Natural killer cell (primary cell): ENCODE measurements at regions of chr1 and their contacts with region 1.

Region 1: DNA sequence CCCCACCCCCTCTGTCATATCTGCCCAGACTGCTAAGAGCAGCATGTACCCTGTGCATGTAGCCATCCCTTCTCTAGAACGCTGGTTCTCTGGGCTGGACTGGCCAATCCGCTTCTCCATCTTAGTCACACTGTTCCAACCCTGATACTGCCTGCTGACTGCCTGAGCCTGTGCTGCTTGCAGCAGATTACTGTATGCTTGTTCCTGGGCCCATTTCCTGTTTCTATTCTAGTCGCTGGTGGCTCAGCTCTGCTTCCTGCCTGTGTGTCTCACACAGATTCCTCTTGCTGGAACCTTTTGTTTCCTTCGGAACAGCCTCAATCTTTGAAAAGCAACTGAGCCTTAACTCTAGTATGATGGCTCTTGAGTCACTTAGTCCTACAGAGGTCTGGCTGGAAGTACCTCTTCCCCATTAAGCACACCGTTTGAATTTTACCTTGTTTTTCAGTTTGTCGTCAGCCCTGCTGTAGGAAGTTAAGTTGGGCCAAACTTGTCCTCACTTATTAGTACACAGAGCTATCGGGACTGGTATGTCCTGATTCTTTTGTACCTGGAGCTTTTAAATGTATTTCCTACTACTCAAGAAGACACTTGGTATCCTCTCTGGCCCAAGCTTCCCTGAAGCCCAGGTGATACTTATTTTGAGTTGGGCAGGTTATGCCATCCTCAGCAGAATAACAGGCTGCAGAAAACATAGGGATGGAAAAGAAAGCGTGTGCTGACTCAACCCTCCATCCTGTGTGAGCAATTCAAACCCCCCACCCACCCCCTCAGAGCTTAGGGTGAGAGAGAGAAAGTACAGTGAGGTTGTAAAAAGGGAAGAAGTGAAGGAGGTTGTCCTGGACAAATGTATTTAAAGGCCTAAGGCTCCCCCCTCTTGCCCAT is 43.4 kb upstream of the PIGV start:
- DNase-seq: peak; percentile 59 to 91
- ATAC-seq: peak; percentile 94 to 98 (median 96)
- H3K4me3 ChIP-seq: no peak overlapping the region
- H3K4me3 Mint-ChIP-seq: peak overlapping the region; percentile 70
- H3K27ac ChIP-seq: peak overlapping the region; percentile 76
- H3K27ac Mint-ChIP-seq: peak overlapping the region; percentile 92 to 93
- H3K4me1 ChIP-seq: peaks cover 47% of the 10 kb centered on the region
- H3K4me1 Mint-ChIP-seq: peaks cover 66 to 68% of the 10 kb centered on the region in 2 donors
- H3K27me3 ChIP-seq: no peaks in the 10 kb centered on the region
- H3K27me3 Mint-ChIP-seq: no peaks in the 10 kb centered on the region
- CTCF ChIP-seq: no peak

Region 2: DNA sequence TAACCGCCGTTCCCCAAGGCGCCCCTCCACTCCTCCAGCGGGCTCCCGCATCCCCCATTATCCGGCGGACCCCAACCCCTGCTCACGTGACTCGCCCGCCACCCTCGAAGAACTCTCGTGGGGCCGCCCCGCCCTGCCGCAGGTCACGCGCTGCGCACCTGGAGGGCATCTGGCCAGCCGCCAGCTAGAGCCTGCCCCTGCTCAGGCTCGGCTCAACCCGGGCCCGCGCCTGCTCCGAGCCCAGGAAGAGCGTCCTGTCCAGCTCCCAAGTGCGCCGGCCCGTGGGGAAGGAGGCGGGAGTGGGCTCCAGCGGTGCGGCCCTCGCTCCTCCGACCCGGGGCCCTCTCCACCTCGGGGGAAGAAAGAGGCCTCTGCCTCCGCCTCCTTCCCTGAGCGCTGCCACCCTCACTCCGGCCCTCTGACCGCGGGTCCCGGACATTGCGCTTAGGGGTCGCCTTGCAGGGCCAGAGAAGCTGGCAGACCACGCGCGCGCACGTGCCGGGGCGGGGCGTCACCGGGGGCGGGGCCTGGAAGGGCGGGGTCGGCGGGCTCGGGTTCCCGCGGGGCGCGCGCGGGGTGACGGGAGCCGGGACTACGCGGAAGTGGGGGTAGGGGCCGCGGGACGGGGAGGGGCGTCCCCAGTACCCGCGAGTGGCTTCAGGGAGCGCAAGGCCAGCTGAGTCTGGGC is 243.7 kb before region 1 on chr1:
- intact Hi-C with region 1: no loop called
- DNase-seq: peak; percentile 85 to 89
- ATAC-seq: peak; percentile 76 to 89 (median 79)
- H3K4me3 ChIP-seq: peak overlapping the region; percentile 82
- H3K4me3 Mint-ChIP-seq: peak overlapping the region; percentile 85
- H3K27ac ChIP-seq: peak overlapping the region; percentile 91
- H3K27ac Mint-ChIP-seq: peak overlapping the region; percentile 76 to 77
- H3K4me1 ChIP-seq: peaks cover 15% of the 10 kb centered on the region
- H3K4me1 Mint-ChIP-seq: peaks cover 0 to 16% of the 10 kb centered on the region in 2 donors
- H3K27me3 ChIP-seq: no peaks in the 10 kb centered on the region
- H3K27me3 Mint-ChIP-seq: no peaks in the 10 kb centered on the region
- CTCF ChIP-seq: peak; percentile 50

Region 3: DNA sequence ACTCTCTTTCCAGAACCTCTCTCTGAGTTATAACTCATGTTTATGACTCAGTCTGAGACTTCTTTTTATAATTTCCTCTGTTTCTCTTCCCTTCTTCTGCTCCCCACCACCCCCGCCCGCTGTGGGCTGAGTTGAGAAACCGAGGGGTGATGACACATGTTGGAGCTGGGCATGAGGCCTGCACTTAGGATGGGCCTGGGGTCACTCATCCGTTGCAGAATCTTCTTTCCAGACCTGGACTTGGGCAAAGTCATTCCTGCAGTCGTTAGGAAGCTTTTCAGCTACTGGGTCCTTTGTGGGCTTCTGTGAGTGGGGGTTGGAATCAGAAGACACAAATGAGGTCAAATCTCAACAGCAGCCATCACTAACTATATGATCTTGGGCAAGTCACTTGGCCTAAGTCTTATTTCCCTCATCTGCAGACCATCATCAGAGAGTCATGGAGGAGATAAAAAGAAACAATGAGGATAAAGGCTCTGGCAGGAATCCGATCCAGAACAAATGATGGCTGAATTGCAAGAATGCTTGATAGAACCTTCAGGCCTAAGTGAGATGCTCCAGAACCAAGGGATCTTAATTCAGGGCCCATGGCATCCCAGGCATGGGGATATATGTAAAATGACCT is 161.4 kb before region 1 on chr1:
- intact Hi-C with region 1: no loop called
- DNase-seq: no peak
- ATAC-seq: peak in 1 of 3 donors; percentile 52
- H3K4me3 ChIP-seq: no peak overlapping the region
- H3K4me3 Mint-ChIP-seq: no peak overlapping the region
- H3K27ac ChIP-seq: no peak overlapping the region
- H3K27ac Mint-ChIP-seq: peak overlapping the region in 1 of 2 donors; percentile 44
- H3K4me1 ChIP-seq: peaks cover 7% of the 10 kb centered on the region
- H3K4me1 Mint-ChIP-seq: peaks cover 3 to 9% of the 10 kb centered on the region in 2 donors
- H3K27me3 ChIP-seq: no peaks in the 10 kb centered on the region
- H3K27me3 Mint-ChIP-seq: no peaks in the 10 kb centered on the region
- CTCF ChIP-seq: no peak

Region 4: GRCh38 chr1:26695356-26696118 is 48.8 kb before region 1 on chr1 and contains the start of gene ARID1A:
- intact Hi-C with region 1: loop called (anchors 1 kb)
- DNase-seq: peak; percentile 97 to 98
- ATAC-seq: peak; percentile 63 to 83 (median 68)
- H3K4me3 ChIP-seq: peak within 1 kb of the TSS; percentile 71
- H3K4me3 Mint-ChIP-seq: peak within 1 kb of the TSS; percentile 98
- H3K27ac ChIP-seq: peak within 1 kb of the TSS; percentile 84
- H3K27ac Mint-ChIP-seq: peak within 1 kb of the TSS; percentile 91 to 98
- H3K4me1 ChIP-seq: peaks cover 32% of the 10 kb centered on the region
- H3K4me1 Mint-ChIP-seq: peaks cover 37 to 40% of the 10 kb centered on the region in 2 donors
- H3K27me3 ChIP-seq: no peaks in the 10 kb centered on the region
- H3K27me3 Mint-ChIP-seq: no peaks in the 10 kb centered on the region
- CTCF ChIP-seq: no peak
- total RNA-seq, gene ARID1A: 199 to 214 (median 202) TPM

Region 5: GRCh38 chr1:26728645-26729044 is 15.7 kb before region 1 on chr1:
- intact Hi-C with region 1: loop called (anchors 2 kb)
- DNase-seq: no peak
- ATAC-seq: no peak
- H3K4me3 ChIP-seq: no peak overlapping the region
- H3K4me3 Mint-ChIP-seq: no peak overlapping the region
- H3K27ac ChIP-seq: no peak overlapping the region
- H3K27ac Mint-ChIP-seq: peak overlapping the region; percentile 60 to 72
- H3K4me1 ChIP-seq: peaks cover 26% of the 10 kb centered on the region
- H3K4me1 Mint-ChIP-seq: peaks cover 81 to 89% of the 10 kb centered on the region in 2 donors
- H3K27me3 ChIP-seq: no peaks in the 10 kb centered on the region
- H3K27me3 Mint-ChIP-seq: no peaks in the 10 kb centered on the region
- CTCF ChIP-seq: no peak

Region 6: DNA sequence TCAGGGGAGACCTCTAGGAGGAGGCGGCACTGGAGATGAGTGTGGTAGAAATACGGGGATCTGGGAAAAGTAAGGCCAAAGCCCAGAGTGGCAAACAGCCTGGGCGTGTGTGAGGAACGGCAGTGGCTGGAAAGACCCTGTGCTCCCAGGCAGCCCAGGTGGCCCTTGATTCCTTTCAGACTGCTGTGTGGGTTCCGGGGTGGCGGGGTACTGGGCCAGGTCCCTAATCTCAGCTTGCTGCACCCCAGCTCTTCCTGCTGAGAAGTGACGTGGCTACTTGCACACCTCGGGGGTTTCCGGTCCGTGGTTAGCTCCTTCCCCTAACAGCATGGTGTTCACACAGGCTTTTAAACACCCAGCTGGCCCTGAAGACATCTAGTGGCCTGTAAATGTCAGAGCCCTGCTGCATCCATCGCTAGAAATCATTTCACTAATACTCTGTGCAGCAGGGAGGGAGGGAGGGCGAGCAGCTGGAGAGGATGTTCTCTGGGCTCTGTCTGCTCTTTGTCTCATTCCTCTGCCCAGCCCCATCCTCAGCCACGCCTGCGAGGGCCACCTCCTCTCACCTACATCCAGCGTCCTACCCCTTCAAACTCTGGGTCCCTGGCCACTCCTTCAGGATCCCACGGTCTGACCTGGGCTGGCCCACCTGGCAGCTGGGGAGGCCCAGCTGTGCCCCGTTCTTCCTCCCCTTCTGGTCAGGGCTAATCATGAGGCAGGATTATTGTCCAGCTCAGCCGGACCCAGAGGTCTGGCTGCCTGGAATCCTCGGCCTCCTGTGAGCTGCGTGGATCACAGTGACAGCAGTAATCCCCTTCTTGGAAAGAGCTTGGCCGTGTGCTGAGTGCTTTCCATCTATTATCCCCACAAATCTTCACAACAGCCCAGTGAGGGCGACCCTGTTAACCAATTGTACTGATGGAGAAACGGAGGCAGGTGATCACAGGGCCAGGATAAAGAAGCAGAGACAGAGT is 89.4 kb after region 1 on chr1:
- intact Hi-C with region 1: loop called (anchors 1 kb)
- DNase-seq: peak; percentile 83 to 98
- ATAC-seq: peak; percentile 93 to 98 (median 96)
- H3K4me3 ChIP-seq: peak overlapping the region; percentile 17
- H3K4me3 Mint-ChIP-seq: peak overlapping the region; percentile 87
- H3K27ac ChIP-seq: peak overlapping the region; percentile 98
- H3K27ac Mint-ChIP-seq: peak overlapping the region; percentile 99 to 100
- H3K4me1 ChIP-seq: peaks cover 70% of the 10 kb centered on the region
- H3K4me1 Mint-ChIP-seq: peaks cover 64 to 68% of the 10 kb centered on the region in 2 donors
- H3K27me3 ChIP-seq: no peaks in the 10 kb centered on the region
- H3K27me3 Mint-ChIP-seq: no peaks in the 10 kb centered on the region
- CTCF ChIP-seq: peak; percentile 25